HepG2 (cell line): ENCODE measurements at regions of chr3 and their contacts with region 1.

Region 1: GRCh38 chr3:185900226-185900625 is 37.6 kb downstream of the TRA2B start:
- DNase-seq: peak; percentile 69
- ATAC-seq: peak; percentile 97
- H3K4me3 ChIP-seq: no peak overlapping the region; a peak in 1 of 6 replicates
- H3K27ac ChIP-seq: no peak overlapping the region
- H3K4me1 ChIP-seq: peaks cover 15% of the 10 kb centered on the region
- H3K27me3 ChIP-seq: no peaks in the 10 kb centered on the region; a peak in 1 of 5 replicates
- CTCF ChIP-seq: no peak
- EP300 ChIP-seq: no peak
- POLR2A ChIP-seq: no peak
- RAD21 ChIP-seq: no peak

Region 2: GRCh38 chr3:185659942-185660921 is 240.0 kb before region 1 on chr3:
- CTCF ChIA-PET with region 1: no interaction called
- POLR2A ChIA-PET with region 1: no interaction called
- in situ Hi-C with region 1: loop called (anchors 10 kb)
- intact Hi-C with region 1: loop called (anchors 5 kb)
- DNase-seq: peak; percentile 72
- ATAC-seq: peak; percentile 80
- H3K4me3 ChIP-seq: no peak overlapping the region
- H3K27ac ChIP-seq: no peak overlapping the region
- H3K4me1 ChIP-seq: no peaks in the 10 kb centered on the region
- H3K27me3 ChIP-seq: no peaks in the 10 kb centered on the region
- CTCF ChIP-seq: peak; percentile 92
- EP300 ChIP-seq: no peak
- POLR2A ChIP-seq: no peak
- RAD21 ChIP-seq: peak; percentile 80

Region 3: DNA sequence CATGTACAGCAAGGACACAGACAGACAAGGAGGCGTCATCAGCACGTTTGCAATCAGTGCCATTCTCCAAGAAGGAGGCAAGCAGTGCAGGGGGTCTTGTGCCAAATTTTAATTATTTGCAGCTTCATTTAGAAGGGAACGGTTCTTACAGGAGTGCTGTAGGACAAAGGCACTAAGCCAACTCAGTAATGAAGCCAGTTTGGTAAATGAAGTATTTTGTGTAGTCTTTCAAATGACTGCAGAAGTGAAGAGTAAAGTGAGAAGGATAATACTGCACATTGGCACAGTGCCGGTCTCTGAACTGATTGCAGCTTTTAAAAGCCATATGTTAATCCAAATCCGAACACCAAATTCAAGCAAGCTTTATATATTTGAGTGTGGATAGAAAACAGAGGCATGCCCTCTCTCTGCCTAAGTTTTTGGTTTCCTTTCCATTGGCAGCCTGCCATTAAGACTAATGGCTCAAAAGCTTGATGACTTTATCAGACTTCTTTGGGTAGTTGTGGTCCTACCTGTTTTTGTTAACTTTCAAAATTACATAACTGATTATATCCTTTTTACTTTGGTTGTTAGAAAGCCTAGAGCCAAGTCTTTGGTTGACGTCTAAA is 212.9 kb before region 1 on chr3:
- CTCF ChIA-PET with region 1: no interaction called
- POLR2A ChIA-PET with region 1: no interaction called
- in situ Hi-C with region 1: loop called (anchors 10 kb)
- intact Hi-C with region 1: no loop called
- DNase-seq: no peak
- ATAC-seq: no peak
- H3K4me3 ChIP-seq: no peak overlapping the region
- H3K27ac ChIP-seq: no peak overlapping the region
- H3K4me1 ChIP-seq: no peaks in the 10 kb centered on the region
- H3K27me3 ChIP-seq: no peaks in the 10 kb centered on the region
- CTCF ChIP-seq: no peak
- EP300 ChIP-seq: no peak
- POLR2A ChIP-seq: no peak
- RAD21 ChIP-seq: no peak

Region 4: GRCh38 chr3:185846037-185846436 is 54.2 kb before region 1 on chr3:
- CTCF ChIA-PET with region 1: no interaction called
- POLR2A ChIA-PET with region 1: no interaction called
- in situ Hi-C with region 1: no loop called
- intact Hi-C with region 1: no loop called
- DNase-seq: no peak
- ATAC-seq: no peak
- H3K4me3 ChIP-seq: no peak overlapping the region
- H3K27ac ChIP-seq: no peak overlapping the region
- H3K4me1 ChIP-seq: peaks cover 34% of the 10 kb centered on the region
- H3K27me3 ChIP-seq: no peaks in the 10 kb centered on the region; a peak in 2 of 5 replicates
- CTCF ChIP-seq: no peak
- EP300 ChIP-seq: no peak
- POLR2A ChIP-seq: no peak
- RAD21 ChIP-seq: no peak